GM12878 (cell line): ENCODE measurements at regions of chr1 and their contacts with region 1.

Region 1: GRCh38 chr1:90402893-90403849 is 313.9 kb downstream of the BARHL2 start:
- DNase-seq: no peak
- ATAC-seq: no peak
- H3K4me3 ChIP-seq: no peak overlapping the region
- H3K27ac ChIP-seq: no peak overlapping the region
- H3K4me1 ChIP-seq: no peaks in the 10 kb centered on the region
- H3K27me3 ChIP-seq: no peaks in the 10 kb centered on the region
- CTCF ChIP-seq: no peak
- EP300 ChIP-seq: no peak
- POLR2A ChIP-seq: no peak
- RAD21 ChIP-seq: no peak

Region 2: GRCh38 chr1:90434460-90434859 is 31.3 kb after region 1 on chr1:
- CTCF ChIA-PET with region 1: interaction called, 4 read pairs
- POLR2A ChIA-PET with region 1: no interaction called
- RAD21 ChIA-PET with region 1: interaction called, 5 read pairs
- SMC1A ChIA-PET with region 1: interaction called, 13 read pairs
- in situ Hi-C with region 1: no loop called
- intact Hi-C with region 1: no loop called
- DNase-seq: no peak
- ATAC-seq: peak; percentile 84
- H3K4me3 ChIP-seq: no peak overlapping the region
- H3K27ac ChIP-seq: no peak overlapping the region
- H3K4me1 ChIP-seq: no peaks in the 10 kb centered on the region
- H3K27me3 ChIP-seq: no peaks in the 10 kb centered on the region
- CTCF ChIP-seq: peak in 2 of 3 experiments; percentile 11 to 21; a peak in 2 of 6 replicates
- EP300 ChIP-seq: no peak
- POLR2A ChIP-seq: no peak
- RAD21 ChIP-seq: no peak

Region 3: GRCh38 chr1:90561911-90562310 is 158.7 kb after region 1 on chr1:
- CTCF ChIA-PET with region 1: no interaction called
- POLR2A ChIA-PET with region 1: no interaction called
- RAD21 ChIA-PET with region 1: no interaction called
- SMC1A ChIA-PET with region 1: no interaction called
- in situ Hi-C with region 1: no loop called
- intact Hi-C with region 1: no loop called
- DNase-seq: no peak
- ATAC-seq: peak; percentile 65
- H3K4me3 ChIP-seq: no peak overlapping the region
- H3K27ac ChIP-seq: no peak overlapping the region
- H3K4me1 ChIP-seq: no peaks in the 10 kb centered on the region
- H3K27me3 ChIP-seq: no peaks in the 10 kb centered on the region
- CTCF ChIP-seq: no peak
- EP300 ChIP-seq: no peak
- POLR2A ChIP-seq: no peak
- RAD21 ChIP-seq: no peak

Region 4: DNA sequence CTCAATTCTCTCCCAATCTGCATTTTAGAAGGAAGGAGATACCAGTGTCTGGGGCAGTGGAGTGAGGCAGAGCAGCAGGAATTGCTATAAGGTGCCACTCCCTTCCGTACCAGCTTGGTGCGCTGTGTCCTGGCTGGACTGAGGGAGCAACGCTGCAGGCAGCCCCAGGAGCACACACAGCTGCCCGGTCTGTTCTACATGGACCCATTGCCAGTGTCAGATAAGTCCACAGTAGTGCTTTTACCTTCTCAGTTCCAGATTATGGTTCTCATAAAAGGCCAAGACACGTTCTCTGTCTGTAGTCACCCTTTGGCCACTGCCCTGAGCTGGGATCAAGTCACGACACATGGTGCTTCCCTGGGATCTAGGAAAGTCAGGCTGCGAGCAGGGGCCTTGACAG is 358.0 kb after region 1 on chr1:
- CTCF ChIA-PET with region 1: no interaction called
- POLR2A ChIA-PET with region 1: no interaction called
- RAD21 ChIA-PET with region 1: no interaction called
- SMC1A ChIA-PET with region 1: no interaction called
- in situ Hi-C with region 1: no loop called
- intact Hi-C with region 1: no loop called
- DNase-seq: no peak
- ATAC-seq: no peak
- H3K4me3 ChIP-seq: no peak overlapping the region
- H3K27ac ChIP-seq: no peak overlapping the region
- H3K4me1 ChIP-seq: no peaks in the 10 kb centered on the region
- H3K27me3 ChIP-seq: 0 out of 4 replicates have a peak, but pooled peaks cover 0 to 2% of the 10 kb centered on the region in 2 experiments
- CTCF ChIP-seq: no peak
- EP300 ChIP-seq: no peak
- POLR2A ChIP-seq: no peak
- RAD21 ChIP-seq: no peak